ENCODE measurements at regions of chr10 and their contacts with region 1.

Region 1: GRCh38 chr10:122703439-122704118 is 3.9 kb upstream of the C10orf120 start:
- DNase-seq: peak; percentile 2 to 47 (median 33)
- ATAC-seq: peak; percentile 57
- H3K4me3 ChIP-seq: no peak overlapping the region
- H3K4me3 Mint-ChIP-seq: no peak overlapping the region
- H3K27ac ChIP-seq: no peak overlapping the region
- H3K27ac Mint-ChIP-seq: no peak overlapping the region
- H3K4me1 ChIP-seq: peaks cover 0 to 5% of the 10 kb centered on the region in 2 donors
- H3K4me1 Mint-ChIP-seq: peaks cover 0 to 8% (median 0%) of the 10 kb centered on the region in 7 donors
- H3K27me3 ChIP-seq: no peaks in the 10 kb centered on the region
- H3K27me3 Mint-ChIP-seq: peaks cover 0 to 20% (median 5%) of the 10 kb centered on the region in 5 donors

Region 2: GRCh38 chr10:122142641-122143237 is 560.8 kb before region 1 on chr10:
- CTCF ChIA-PET with region 1: interaction called, 4 read pairs
- POLR2A ChIA-PET with region 1: no interaction called
- intact Hi-C with region 1: loop called in 1 of 2 experiments (anchors 5 kb)
- DNase-seq: peak in 3 of 9 donors; percentile 6 to 43 (median 13)
- ATAC-seq: no peak
- H3K4me3 ChIP-seq: no peak overlapping the region
- H3K4me3 Mint-ChIP-seq: no peak overlapping the region
- H3K27ac ChIP-seq: no peak overlapping the region
- H3K27ac Mint-ChIP-seq: no peak overlapping the region
- H3K4me1 ChIP-seq: no peaks in the 10 kb centered on the region
- H3K4me1 Mint-ChIP-seq: peaks cover 0 to 7% (median 0%) of the 10 kb centered on the region in 7 donors
- H3K27me3 ChIP-seq: no peaks in the 10 kb centered on the region
- H3K27me3 Mint-ChIP-seq: peaks cover 0 to 29% (median 0%) of the 10 kb centered on the region in 5 donors

Region 3: GRCh38 chr10:122342293-122343134 is 361.1 kb before region 1 on chr10:
- CTCF ChIA-PET with region 1: no interaction called
- POLR2A ChIA-PET with region 1: no interaction called
- intact Hi-C with region 1: loop called in 1 of 2 experiments (anchors 1 kb)
- DNase-seq: peak in 8 of 9 donors; percentile 33 to 78 (median 66)
- ATAC-seq: peak; percentile 80
- H3K4me3 ChIP-seq: no peak overlapping the region
- H3K4me3 Mint-ChIP-seq: peak overlapping the region in 1 of 10 donors; percentile 57
- H3K27ac ChIP-seq: no peak overlapping the region
- H3K27ac Mint-ChIP-seq: peak overlapping the region in 4 of 9 donors; percentile 12 to 75 (median 42)
- H3K4me1 ChIP-seq: no peaks in the 10 kb centered on the region
- H3K4me1 Mint-ChIP-seq: peaks cover 0 to 8% (median 6%) of the 10 kb centered on the region in 7 donors
- H3K27me3 ChIP-seq: no peaks in the 10 kb centered on the region
- H3K27me3 Mint-ChIP-seq: peaks cover 0 to 7% (median 0%) of the 10 kb centered on the region in 5 donors

Region 4: GRCh38 chr10:122510326-122510725 is 193.3 kb before region 1 on chr10:
- CTCF ChIA-PET with region 1: no interaction called
- POLR2A ChIA-PET with region 1: no interaction called
- intact Hi-C with region 1: loop called in 1 of 2 experiments (anchors 5 kb)
- DNase-seq: no peak
- ATAC-seq: no peak
- H3K4me3 ChIP-seq: no peak overlapping the region
- H3K4me3 Mint-ChIP-seq: no peak overlapping the region
- H3K27ac ChIP-seq: no peak overlapping the region
- H3K27ac Mint-ChIP-seq: no peak overlapping the region
- H3K4me1 ChIP-seq: peaks cover 0 to 20% of the 10 kb centered on the region in 2 donors
- H3K4me1 Mint-ChIP-seq: peaks cover 0 to 11% (median 5%) of the 10 kb centered on the region in 7 donors
- H3K27me3 ChIP-seq: no peaks in the 10 kb centered on the region
- H3K27me3 Mint-ChIP-seq: peaks cover 0 to 4% (median 0%) of the 10 kb centered on the region in 5 donors

Region 5: GRCh38 chr10:123559066-123559822 is 855.7 kb after region 1 on chr10:
- CTCF ChIA-PET with region 1: no interaction called
- POLR2A ChIA-PET with region 1: no interaction called
- intact Hi-C with region 1: loop called in 1 of 2 experiments (anchors 2 kb)
- DNase-seq: peak; percentile 31 to 76 (median 49)
- ATAC-seq: peak; percentile 78
- H3K4me3 ChIP-seq: no peak overlapping the region
- H3K4me3 Mint-ChIP-seq: no peak overlapping the region
- H3K27ac ChIP-seq: no peak overlapping the region
- H3K27ac Mint-ChIP-seq: peak overlapping the region in 1 of 9 donors; percentile 20
- H3K4me1 ChIP-seq: no peaks in the 10 kb centered on the region
- H3K4me1 Mint-ChIP-seq: peaks cover 0 to 6% (median 0%) of the 10 kb centered on the region in 7 donors
- H3K27me3 ChIP-seq: no peaks in the 10 kb centered on the region
- H3K27me3 Mint-ChIP-seq: peaks cover 3 to 23% (median 20%) of the 10 kb centered on the region in 5 donors